AG04450 (cell line): ENCODE measurements at regions of chr19 and their contacts with region 1.

Region 1: GRCh38 chr19:18291590-18292461 is 10.4 kb upstream of the JUND start:
- DNase-seq: no peak
- H3K4me3 ChIP-seq: peak overlapping the region; percentile 69
- H3K27ac ChIP-seq: peak overlapping the region; percentile 94
- H3K27me3 ChIP-seq: no peaks in the 10 kb centered on the region
- CTCF ChIP-seq: no peak

Region 2: DNA sequence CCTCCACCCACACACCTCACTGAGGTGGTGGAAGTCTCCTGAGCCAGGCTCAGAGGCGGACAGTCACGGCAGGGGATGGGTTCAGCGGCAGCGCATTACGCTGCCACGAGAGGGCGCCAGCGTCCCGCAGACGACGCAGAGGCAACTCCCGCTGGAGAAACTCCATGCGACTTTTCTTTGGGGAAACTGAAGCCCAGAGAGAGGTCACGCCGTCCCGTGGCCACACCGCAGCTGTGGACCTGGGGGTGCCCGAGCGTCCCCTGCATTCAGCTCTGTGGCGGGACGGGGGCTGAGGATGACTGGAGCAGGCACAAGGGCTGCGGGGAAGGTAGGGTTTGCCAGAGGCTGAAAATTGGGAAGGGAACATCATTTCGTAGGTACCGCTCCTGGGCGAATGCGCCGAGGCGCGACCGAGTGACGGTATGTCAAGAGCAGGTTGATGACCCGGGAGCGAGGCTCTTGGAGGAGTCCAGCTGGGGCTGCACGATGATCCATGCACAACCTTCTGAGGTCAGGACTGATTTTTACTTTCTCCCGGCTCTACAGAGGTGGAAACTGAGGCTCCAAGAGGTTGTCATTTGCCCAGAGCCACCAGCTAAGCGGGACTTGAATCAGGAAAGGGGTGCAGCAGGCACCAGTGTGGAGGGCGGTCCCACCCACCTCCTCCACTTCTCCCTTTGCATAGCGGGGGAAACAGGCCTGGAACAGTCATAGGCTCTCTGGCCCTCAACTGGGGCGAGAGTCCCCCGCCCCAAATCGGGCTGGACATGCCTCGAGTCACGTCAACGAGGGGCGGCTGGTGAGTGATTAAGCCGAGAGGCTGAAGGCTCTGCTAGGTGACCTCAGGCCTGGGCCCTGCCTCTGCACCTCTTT is 284.5 kb before region 1 on chr19:
- CTCF ChIA-PET with region 1: no interaction called
- POLR2A ChIA-PET with region 1: no interaction called
- DNase-seq: no peak
- H3K4me3 ChIP-seq: peak overlapping the region; percentile 58
- H3K27ac ChIP-seq: peak overlapping the region; percentile 21
- H3K27me3 ChIP-seq: no peaks in the 10 kb centered on the region
- CTCF ChIP-seq: peak; percentile 97

Region 3: GRCh38 chr19:18214779-18215433 is 76.9 kb before region 1 on chr19:
- CTCF ChIA-PET with region 1: no interaction called
- POLR2A ChIA-PET with region 1: no interaction called
- DNase-seq: no peak
- H3K4me3 ChIP-seq: no peak overlapping the region
- H3K27ac ChIP-seq: peak overlapping the region; percentile 21
- H3K27me3 ChIP-seq: no peaks in the 10 kb centered on the region
- CTCF ChIP-seq: no peak

Region 4: GRCh38 chr19:18304458-18305310 is 12.9 kb after region 1 on chr19:
- CTCF ChIA-PET with region 1: no interaction called
- POLR2A ChIA-PET with region 1: interaction called, 13 read pairs
- DNase-seq: no peak
- H3K4me3 ChIP-seq: peak overlapping the region; percentile 52
- H3K27ac ChIP-seq: peak overlapping the region; percentile 98
- H3K27me3 ChIP-seq: no peaks in the 10 kb centered on the region
- CTCF ChIP-seq: no peak

Region 5: DNA sequence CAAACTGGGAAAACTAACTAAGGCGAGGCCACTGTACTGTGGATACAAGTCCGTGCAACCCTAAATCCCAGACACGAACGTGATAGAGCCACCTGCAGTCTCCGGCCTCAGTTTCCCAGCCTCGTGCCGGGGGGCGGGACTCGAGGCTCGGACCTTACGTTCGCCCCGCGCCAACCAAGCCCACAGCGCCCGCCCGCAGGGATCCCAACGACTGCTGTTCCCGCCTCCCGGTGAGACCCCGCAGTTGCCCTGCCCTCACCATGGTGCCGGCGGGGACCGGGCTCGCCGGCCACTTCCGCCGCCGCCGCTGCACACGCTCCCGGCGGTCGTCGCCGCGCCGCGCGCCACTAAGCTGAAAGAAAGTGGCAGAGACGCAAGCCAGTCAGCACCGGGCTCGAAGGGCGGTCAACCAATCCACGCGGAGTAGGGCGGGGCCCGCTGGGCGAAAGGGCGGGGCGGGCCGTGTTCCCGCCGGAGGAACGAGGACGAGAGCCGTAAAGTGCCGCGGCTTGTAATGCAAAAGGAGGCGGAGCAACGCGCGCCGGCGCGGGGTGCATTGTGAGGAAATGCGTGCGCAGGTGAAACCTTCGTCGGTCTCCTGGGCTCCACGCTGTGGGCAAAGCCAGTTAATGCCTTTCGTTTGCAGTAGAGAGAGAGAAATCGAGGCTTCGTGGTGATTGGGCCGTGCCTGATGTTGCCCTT is 31.1 kb after region 1 on chr19 and contains the start of gene LSM4:
- CTCF ChIA-PET with region 1: interaction called, 4 read pairs
- POLR2A ChIA-PET with region 1: interaction called, 16 read pairs
- DNase-seq: peak; percentile 89
- H3K4me3 ChIP-seq: peak within 1 kb of the TSS; percentile 79
- H3K27ac ChIP-seq: peak within 1 kb of the TSS; percentile 69
- H3K27me3 ChIP-seq: no peaks in the 10 kb centered on the region
- CTCF ChIP-seq: peak; percentile 33
- polyA plus RNA-seq, gene LSM4: 58.6 and 69.3 TPM in 2 replicates

Region 6: DNA sequence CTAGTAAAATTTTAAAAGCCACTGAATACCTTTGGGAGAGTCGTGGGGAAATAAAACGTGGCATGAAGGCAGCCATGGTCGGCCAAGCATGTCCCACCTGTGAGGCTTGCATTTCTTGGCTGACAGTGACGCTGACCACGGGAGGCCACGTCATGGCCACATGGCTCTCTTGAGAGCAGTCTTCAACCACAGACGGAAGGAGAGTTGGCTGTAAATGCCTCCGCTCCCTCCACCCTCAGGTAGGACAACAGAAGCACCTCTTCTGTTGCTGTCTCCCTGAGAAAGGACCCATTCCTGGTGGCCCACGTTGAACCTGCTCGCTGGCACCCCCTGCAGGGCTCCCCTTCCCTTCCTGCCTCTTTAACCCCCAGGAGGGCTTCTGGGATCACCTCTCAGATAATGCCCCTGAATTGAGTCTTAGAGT is 116.2 kb after region 1 on chr19:
- CTCF ChIA-PET with region 1: no interaction called
- POLR2A ChIA-PET with region 1: no interaction called
- DNase-seq: no peak
- H3K4me3 ChIP-seq: no peak overlapping the region
- H3K27ac ChIP-seq: no peak overlapping the region
- H3K27me3 ChIP-seq: no peaks in the 10 kb centered on the region
- CTCF ChIP-seq: peak; percentile 44

Region 7: GRCh38 chr19:18419195-18419698 is 127.4 kb after region 1 on chr19 and contains the start of gene SSBP4:
- CTCF ChIA-PET with region 1: interaction called, 18 read pairs
- POLR2A ChIA-PET with region 1: no interaction called
- DNase-seq: no peak
- H3K4me3 ChIP-seq: peak within 1 kb of the TSS; percentile 71
- H3K27ac ChIP-seq: peak within 1 kb of the TSS; percentile 47
- H3K27me3 ChIP-seq: no peaks in the 10 kb centered on the region
- CTCF ChIP-seq: 0 out of 2 replicates have a peak, but pooled peaks have one; percentile 18
- polyA plus RNA-seq, gene SSBP4: 9.4 and 12.6 TPM in 2 replicates

Region 8: GRCh38 chr19:19900729-19901444 is 1609.1 kb after region 1 on chr19 and contains the start of gene ZNF93:
- CTCF ChIA-PET with region 1: no interaction called
- POLR2A ChIA-PET with region 1: no interaction called
- DNase-seq: peak; percentile 93
- H3K4me3 ChIP-seq: peak within 1 kb of the TSS; percentile 82
- H3K27ac ChIP-seq: peak within 1 kb of the TSS; percentile 97
- H3K27me3 ChIP-seq: no peaks in the 10 kb centered on the region
- CTCF ChIP-seq: no peak
- polyA plus RNA-seq, gene ZNF93: 4.6 and 4.9 TPM in 2 replicates